Naive thymus-derived CD8-positive, alpha-beta T cell (primary cell): ENCODE measurements at regions of chr18 and their contacts with region 1.

Region 1: GRCh38 chr18:21600526-21601410 is at the start of gene ESCO1:
- DNase-seq: peak; percentile 82 to 97 (median 93)
- ATAC-seq: peak; percentile 86
- H3K4me3 Mint-ChIP-seq: peak within 1 kb of the TSS; percentile 91 to 99 (median 98)
- H3K27ac Mint-ChIP-seq: peak within 1 kb of the TSS; percentile 97 to 100 (median 99)
- H3K4me1 Mint-ChIP-seq: peaks cover 15 to 50% (median 42%) of the 10 kb centered on the region in 4 donors
- H3K27me3 Mint-ChIP-seq: peaks cover 0 to 3% (median 0%) of the 10 kb centered on the region in 5 donors
- polyA plus RNA-seq, gene ESCO1: 5.7 to 9.0 (median 7.5) TPM

Region 2: DNA sequence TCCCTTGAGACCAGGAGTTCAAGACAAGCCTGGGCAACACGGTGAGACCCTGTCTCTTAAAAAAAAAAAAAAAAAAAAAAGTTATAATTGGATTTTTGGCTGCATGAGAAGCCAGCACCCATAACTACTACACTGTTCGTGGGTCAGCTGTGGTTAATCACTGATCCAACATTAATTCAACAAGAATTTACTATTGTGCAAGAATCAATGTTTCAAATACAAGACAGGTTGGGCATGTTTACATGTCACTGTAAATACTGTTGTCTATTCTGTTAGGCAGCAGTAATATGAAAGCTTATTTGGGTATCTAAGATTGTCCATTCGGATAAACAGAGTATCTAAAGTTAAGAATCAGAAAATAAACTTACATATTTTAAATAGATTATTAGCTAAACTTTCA is 62.5 kb before region 1 on chr18:
- POLR2A ChIA-PET with region 1: no interaction called
- DNase-seq: no peak
- ATAC-seq: no peak
- H3K4me3 Mint-ChIP-seq: no peak overlapping the region
- H3K27ac Mint-ChIP-seq: no peak overlapping the region
- H3K4me1 Mint-ChIP-seq: peaks cover 0 to 4% (median 1%) of the 10 kb centered on the region in 4 donors
- H3K27me3 Mint-ChIP-seq: no peaks in the 10 kb centered on the region

Region 3: DNA sequence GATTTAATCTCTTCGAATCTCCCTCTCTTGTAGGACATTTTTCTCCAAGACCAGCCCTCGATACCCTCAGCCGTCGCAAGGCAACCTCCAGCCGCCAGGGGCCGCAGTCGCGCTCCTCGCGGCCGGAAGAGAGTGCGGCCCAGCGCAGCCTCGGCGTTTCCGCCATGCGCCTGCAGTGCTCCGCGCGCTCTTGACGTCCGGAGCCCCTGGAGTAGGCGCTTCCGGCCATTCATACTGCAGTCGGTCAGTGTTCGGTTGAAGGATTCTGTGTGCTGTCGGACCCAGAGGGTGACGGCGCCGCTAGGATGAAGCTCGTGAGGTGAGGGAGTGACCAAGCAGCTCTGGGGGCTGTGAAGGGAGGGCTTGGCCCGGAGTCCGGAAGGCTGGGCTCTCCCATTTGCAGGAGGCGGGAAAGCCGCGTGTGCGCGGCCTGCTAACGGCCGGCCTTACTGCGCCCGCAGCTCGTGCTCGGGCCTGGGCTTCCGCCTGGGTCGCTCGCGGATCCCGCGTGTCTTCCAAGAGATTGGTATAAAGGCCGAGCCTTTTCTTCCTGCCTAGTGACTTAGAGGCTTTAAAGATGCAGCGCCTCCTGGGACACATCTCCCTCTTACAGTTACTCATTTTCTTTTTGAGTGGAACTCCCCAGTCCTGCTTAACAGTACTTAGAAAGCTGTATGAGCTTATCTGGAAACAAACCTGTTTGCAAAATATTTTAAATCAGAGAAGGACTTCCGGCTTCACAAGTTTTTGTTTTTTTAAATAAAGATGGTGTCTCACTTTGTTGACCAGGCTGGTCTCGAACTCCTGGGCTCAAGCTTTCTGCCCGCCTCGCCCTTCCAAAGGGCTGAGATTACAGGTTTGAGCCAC is 11.6 kb after region 1 on chr18 and contains the start of gene SNRPD1:
- POLR2A ChIA-PET with region 1: interaction called, 109 read pairs
- DNase-seq: peak; percentile 74 to 88 (median 86)
- ATAC-seq: peak; percentile 97 to 99
- H3K4me3 Mint-ChIP-seq: peak within 1 kb of the TSS; percentile 86 to 100 (median 100)
- H3K27ac Mint-ChIP-seq: peak within 1 kb of the TSS; percentile 92 to 100 (median 99)
- H3K4me1 Mint-ChIP-seq: peaks cover 10 to 49% (median 41%) of the 10 kb centered on the region in 4 donors
- H3K27me3 Mint-ChIP-seq: no peaks in the 10 kb centered on the region
- polyA plus RNA-seq, gene SNRPD1: 70.1 to 83.6 (median 78.5) TPM

Region 4: GRCh38 chr18:21682371-21683051 is 81.7 kb after region 1 on chr18:
- POLR2A ChIA-PET with region 1: interaction called, 22 read pairs
- DNase-seq: peak in 6 of 10 donors; percentile 9 to 55 (median 38)
- ATAC-seq: peak; percentile 91 to 92
- H3K4me3 Mint-ChIP-seq: no peak overlapping the region
- H3K27ac Mint-ChIP-seq: no peak overlapping the region
- H3K4me1 Mint-ChIP-seq: peaks cover 1 to 29% (median 13%) of the 10 kb centered on the region in 4 donors
- H3K27me3 Mint-ChIP-seq: no peaks in the 10 kb centered on the region

Region 5: DNA sequence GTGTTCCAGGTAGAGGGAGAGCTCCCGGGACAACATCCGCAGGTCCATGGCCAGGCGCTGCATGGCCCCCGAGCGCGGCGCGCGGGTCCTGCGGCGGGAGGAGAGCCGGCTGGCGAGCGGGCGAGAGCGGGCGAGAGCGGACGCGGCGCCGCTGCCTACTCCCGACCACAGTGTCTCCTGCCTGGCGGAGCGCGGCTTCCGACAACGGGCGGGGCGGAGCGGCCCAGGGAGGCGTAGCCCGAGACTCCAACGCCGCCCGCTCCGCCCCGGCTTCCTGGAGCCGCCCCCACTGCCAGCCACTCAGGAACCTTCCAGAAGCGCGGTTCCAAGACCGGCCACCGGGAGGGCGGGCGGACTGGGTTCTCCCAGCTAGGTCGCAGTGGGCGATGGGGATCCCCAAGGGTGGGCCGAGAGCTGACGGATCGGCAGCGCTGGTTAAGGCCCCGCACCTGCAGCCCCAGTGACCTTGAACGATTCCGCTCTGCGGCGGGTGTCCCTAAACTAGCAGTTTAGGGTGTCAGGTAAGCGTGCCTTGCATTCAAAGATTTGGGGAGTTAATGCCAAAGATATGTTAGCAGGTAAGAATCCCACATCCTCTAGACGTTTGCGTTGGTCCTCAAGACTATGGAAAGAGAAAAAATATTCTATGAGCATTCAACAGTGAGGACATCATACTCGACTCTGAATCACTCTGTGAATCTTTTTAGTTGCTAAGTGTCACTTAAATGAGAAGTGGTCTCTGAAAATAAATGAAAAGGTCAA is 104.0 kb after region 1 on chr18 and contains the start of gene ABHD3:
- POLR2A ChIA-PET with region 1: interaction called, 24 read pairs
- DNase-seq: peak; percentile 87 to 93 (median 89)
- ATAC-seq: peak; percentile 91 to 93
- H3K4me3 Mint-ChIP-seq: peak within 1 kb of the TSS; percentile 90 to 100 (median 97)
- H3K27ac Mint-ChIP-seq: peak within 1 kb of the TSS; percentile 89 to 96 (median 94)
- H3K4me1 Mint-ChIP-seq: peaks cover 11 to 41% (median 38%) of the 10 kb centered on the region in 4 donors
- H3K27me3 Mint-ChIP-seq: no peaks in the 10 kb centered on the region
- polyA plus RNA-seq, gene ABHD3: 16.2 to 20.7 (median 19.7) TPM

Region 6: GRCh38 chr18:21740724-21741510 is 140.1 kb after region 1 on chr18 and contains the start of gene MIB1:
- POLR2A ChIA-PET with region 1: interaction called, 33 read pairs
- DNase-seq: peak; percentile 23 to 99 (median 99)
- ATAC-seq: peak; percentile 18 to 68
- H3K4me3 Mint-ChIP-seq: peak within 1 kb of the TSS; percentile 92 to 97 (median 94)
- H3K27ac Mint-ChIP-seq: peak within 1 kb of the TSS; percentile 67 to 98 (median 96)
- H3K4me1 Mint-ChIP-seq: peaks cover 16 to 51% (median 42%) of the 10 kb centered on the region in 4 donors
- H3K27me3 Mint-ChIP-seq: peaks cover 0 to 8% (median 0%) of the 10 kb centered on the region in 5 donors
- polyA plus RNA-seq, gene MIB1: 3.8 to 7.1 (median 3.9) TPM